Activated CD4-positive, alpha-beta T cell treated with anti-CD3 and anti-CD28 coated beads, Interleukin-2, amount 10 ng/mL, durations not matched to agents 24 days and 14 days (primary cell): ENCODE measurements at regions of chr7 and their contacts with region 1.

Region 1: DNA sequence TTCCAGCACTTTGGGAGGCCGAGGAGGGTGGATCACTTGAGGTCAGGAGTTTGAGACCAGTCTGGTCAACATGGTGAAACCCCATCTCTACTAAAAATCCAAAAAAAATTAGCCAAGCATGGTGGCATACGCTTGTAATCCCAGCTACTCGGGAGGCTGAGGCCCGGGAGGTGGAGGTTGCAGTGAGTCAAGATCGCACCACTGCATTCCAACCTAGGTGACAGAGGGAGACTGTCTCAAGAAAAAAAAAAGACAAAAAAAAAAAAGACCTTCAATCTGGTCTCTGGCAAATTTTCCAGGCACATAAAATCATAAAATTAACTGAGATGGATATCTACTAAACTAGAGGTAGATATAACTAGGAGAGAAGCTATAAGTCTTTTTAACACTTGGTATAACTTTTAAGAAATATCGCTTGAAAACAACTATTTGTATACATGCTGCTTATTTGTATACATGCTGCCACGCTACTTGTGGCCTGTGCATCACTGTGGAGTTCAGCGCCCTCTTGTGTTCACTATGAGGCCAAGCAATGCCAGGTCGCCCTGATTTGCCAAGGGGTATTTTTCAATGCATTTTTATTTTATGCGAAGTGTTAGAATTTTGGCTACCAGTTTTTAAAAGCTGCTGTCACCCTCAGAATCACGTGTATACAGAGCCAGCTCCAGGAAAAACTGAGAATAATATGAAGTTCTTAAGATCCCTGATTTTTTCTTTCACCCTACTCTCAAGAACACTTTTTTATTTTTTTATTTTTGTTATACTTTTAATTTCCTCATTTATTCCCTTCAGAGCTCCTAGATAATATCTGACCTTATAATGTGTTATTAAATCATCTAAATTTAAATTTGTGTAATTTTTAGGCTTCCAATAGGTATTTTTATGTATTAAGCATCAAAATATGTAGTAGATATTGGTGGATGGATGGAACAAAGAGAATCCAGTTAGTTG is 26.7 kb downstream of the CYCS start:
- DNase-seq: peak; percentile 88
- H3K4me3 Mint-ChIP-seq: no peak overlapping the region
- H3K27ac Mint-ChIP-seq: no peak overlapping the region
- H3K4me1 Mint-ChIP-seq: peaks cover 10% of the 10 kb centered on the region
- H3K27me3 Mint-ChIP-seq: peaks cover 7% of the 10 kb centered on the region

Region 2: GRCh38 chr7:24290004-24290641 is 808.2 kb before region 1 on chr7:
- intact Hi-C with region 1: loop called (anchors 5 kb)
- DNase-seq: peak; percentile 82
- H3K4me3 Mint-ChIP-seq: no peak overlapping the region
- H3K27ac Mint-ChIP-seq: no peak overlapping the region
- H3K4me1 Mint-ChIP-seq: peaks cover 6% of the 10 kb centered on the region
- H3K27me3 Mint-ChIP-seq: peaks cover 42% of the 10 kb centered on the region

Region 3: GRCh38 chr7:24812310-24812945 is 285.9 kb before region 1 on chr7:
- intact Hi-C with region 1: loop called (anchors 1 kb)
- DNase-seq: peak; percentile 83
- H3K4me3 Mint-ChIP-seq: no peak overlapping the region
- H3K27ac Mint-ChIP-seq: no peak overlapping the region
- H3K4me1 Mint-ChIP-seq: no peaks in the 10 kb centered on the region
- H3K27me3 Mint-ChIP-seq: no peaks in the 10 kb centered on the region

Region 4: DNA sequence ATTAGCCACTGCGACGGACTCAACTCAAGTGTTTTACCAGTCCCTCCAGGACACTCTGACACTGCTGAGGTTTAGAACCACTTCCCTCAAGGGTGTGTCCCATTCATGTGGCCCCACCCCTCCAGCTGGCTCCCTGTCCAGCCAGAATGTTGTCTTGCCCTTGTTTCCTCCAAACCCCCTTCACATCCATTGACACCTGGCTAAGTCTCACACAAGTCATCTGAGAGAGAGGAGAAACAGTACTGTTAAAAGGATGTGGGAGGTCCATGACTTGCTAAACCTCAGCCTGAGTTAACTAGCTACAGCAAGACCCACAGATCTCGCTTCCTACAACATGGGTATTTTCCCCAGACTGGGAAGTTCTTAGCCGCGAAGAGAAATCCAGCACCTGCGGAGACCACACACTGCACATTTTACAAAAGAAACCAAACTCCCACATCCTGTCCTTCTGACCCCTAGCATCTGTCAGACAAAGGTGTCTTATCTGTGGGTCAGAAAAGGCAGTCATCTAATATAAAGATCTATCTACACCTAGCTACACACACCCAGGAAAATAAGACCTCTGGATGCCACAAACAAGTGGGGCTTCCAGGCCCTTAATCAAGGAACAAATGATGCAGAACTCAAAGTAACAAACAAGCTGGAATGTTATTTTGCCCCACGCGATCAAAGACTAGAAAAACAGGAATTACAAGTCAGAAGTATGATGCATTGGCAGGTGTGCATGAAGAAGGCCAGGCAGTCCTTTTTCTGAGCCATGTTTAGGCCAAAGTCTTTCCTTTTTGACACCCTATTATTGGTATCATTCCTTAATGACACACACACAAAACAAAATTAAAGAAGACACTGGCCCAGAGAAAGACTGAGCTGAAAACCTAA is 132.3 kb before region 1 on chr7:
- intact Hi-C with region 1: no loop called
- DNase-seq: peak; percentile 88
- H3K4me3 Mint-ChIP-seq: peak overlapping the region; percentile 75
- H3K27ac Mint-ChIP-seq: peak overlapping the region; percentile 84
- H3K4me1 Mint-ChIP-seq: peaks cover 76% of the 10 kb centered on the region
- H3K27me3 Mint-ChIP-seq: no peaks in the 10 kb centered on the region

Region 5: DNA sequence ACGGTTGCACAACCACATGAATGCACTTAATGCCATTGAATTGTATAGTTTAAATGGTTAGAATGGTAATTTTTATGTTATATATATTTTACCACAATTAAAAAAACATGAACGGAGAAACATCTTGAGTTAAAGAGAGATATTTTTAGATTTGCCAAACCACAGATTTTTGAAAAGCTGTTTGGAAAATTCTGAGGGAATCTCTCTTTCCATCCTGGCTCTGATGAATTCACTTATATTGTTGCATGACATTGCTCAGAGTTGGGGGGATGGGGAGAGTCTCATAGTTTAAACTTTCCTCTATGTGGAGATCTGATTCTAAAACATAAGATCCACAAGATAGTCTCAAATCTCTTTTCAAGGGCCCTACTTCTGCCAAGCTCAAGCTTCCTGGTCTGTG is 404.9 kb after region 1 on chr7:
- intact Hi-C with region 1: no loop called
- DNase-seq: no peak
- H3K4me3 Mint-ChIP-seq: no peak overlapping the region
- H3K27ac Mint-ChIP-seq: no peak overlapping the region
- H3K4me1 Mint-ChIP-seq: no peaks in the 10 kb centered on the region
- H3K27me3 Mint-ChIP-seq: peaks cover 7% of the 10 kb centered on the region

Region 6: DNA sequence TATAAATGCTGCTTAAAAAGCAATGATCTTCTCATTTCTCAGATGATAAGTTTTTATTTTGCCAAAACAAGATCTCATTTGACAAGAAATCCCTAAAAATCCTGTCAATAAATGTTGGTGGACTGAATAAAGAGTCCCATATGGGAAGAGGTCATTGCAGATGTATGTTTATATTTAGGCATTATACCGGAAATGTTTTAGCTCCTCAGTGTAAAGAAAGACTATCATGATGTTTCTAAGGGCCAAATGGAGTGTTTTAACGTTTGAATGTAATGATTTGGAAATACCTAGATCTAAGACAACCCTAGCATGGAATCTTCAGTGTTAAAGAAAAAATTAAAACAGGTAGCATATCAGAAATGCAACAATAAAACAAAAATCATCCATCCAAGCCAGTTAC is 595.8 kb after region 1 on chr7:
- intact Hi-C with region 1: no loop called
- DNase-seq: no peak
- H3K4me3 Mint-ChIP-seq: no peak overlapping the region
- H3K27ac Mint-ChIP-seq: no peak overlapping the region
- H3K4me1 Mint-ChIP-seq: no peaks in the 10 kb centered on the region
- H3K27me3 Mint-ChIP-seq: peaks cover 3% of the 10 kb centered on the region